ENCODE measurements at regions of chr17 and their contacts with region 1.

Region 1: DNA sequence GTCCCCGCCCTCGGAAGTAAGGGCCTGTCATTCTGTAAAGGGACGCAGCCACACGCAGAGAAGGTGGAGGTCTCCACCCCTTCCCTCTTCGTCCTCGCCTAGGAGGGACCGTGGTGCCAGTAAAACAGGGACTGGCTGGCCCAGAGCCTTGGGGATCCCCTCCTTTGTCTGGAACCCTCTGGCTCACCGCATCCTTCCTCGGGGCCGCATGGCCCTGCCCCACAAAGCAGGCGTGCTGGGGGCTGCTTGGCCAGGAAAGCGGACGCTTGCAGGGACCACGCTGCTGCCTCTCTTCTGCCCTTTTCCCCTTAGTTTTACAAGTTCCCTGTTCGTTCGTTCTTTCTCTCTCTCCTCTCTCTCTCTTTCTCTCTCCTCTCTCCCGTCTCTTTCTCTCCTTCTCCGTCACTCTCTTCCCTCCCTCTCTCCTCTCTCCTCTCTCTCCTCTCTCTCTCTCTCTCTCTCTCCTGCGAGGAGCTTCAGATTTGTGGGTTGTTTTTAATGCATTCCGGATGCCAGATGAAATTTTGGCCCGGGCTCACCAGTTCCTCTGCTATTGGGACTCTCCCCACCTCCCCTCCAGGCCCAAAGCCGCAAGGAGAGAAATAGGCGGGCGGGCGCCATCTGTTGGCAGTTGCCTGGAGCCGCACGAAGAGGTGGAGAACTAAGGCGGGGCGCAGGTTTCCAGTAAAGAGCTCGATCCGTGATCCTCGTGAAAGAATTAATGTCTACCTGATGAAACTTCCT is 35.1 kb upstream of the CDRT4 start:
- DNase-seq: peak; percentile 84
- H3K4me3 Mint-ChIP-seq: no peak overlapping the region
- H3K27ac Mint-ChIP-seq: no peak overlapping the region
- H3K4me1 Mint-ChIP-seq: peaks cover 7% of the 10 kb centered on the region
- H3K27me3 Mint-ChIP-seq: no peaks in the 10 kb centered on the region
- CTCF ChIP-seq: peak; percentile 69

Region 2: GRCh38 chr17:15233022-15233805 is 269.3 kb before region 1 on chr17:
- CTCF ChIA-PET with region 1: interaction called, 14 read pairs
- POLR2A ChIA-PET with region 1: no interaction called
- intact Hi-C with region 1: no loop called
- DNase-seq: peak; percentile 68
- H3K4me3 Mint-ChIP-seq: no peak overlapping the region
- H3K27ac Mint-ChIP-seq: no peak overlapping the region
- H3K4me1 Mint-ChIP-seq: no peaks in the 10 kb centered on the region
- H3K27me3 Mint-ChIP-seq: no peaks in the 10 kb centered on the region
- CTCF ChIP-seq: peak; percentile 28

Region 3: DNA sequence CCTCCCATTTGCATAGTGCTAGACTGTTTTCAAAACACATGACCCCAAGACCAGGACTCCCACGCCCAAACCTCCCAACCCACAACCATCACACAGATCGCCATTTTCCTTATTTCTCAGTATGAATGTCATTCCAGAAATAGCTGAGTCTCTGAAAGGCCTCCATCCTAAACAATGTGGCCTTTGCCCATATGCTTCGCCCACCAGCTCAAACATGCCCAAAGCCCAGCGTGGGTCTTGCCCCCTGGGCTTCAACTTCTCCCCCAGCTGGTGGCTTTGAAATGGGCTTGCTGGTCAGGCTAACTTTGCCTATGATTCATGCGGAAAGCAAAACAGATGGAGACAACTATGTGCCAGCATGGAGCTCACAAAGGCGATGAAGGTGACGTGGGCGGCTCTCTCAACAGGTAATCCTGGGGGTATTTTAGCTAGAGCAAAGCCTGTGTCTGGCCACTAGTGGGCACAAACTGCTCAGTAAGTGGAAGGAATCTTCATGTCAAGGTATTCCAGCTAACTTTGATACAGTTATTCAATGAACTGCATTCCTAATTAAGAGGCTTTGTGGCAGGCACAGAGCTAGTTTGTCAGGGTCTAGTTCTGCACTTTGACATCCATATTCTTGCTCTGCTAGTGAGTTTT is 254.5 kb before region 1 on chr17:
- CTCF ChIA-PET with region 1: interaction called, 18 read pairs
- POLR2A ChIA-PET with region 1: no interaction called
- intact Hi-C with region 1: no loop called
- DNase-seq: peak; percentile 35
- H3K4me3 Mint-ChIP-seq: no peak overlapping the region
- H3K27ac Mint-ChIP-seq: no peak overlapping the region
- H3K4me1 Mint-ChIP-seq: no peaks in the 10 kb centered on the region
- H3K27me3 Mint-ChIP-seq: no peaks in the 10 kb centered on the region
- CTCF ChIP-seq: peak; percentile 38

Region 4: GRCh38 chr17:15257258-15257788 is 245.2 kb before region 1 on chr17:
- CTCF ChIA-PET with region 1: interaction called, 148 read pairs
- POLR2A ChIA-PET with region 1: no interaction called
- intact Hi-C with region 1: loop called (anchors 1 kb)
- DNase-seq: peak; percentile 86
- H3K4me3 Mint-ChIP-seq: no peak overlapping the region
- H3K27ac Mint-ChIP-seq: no peak overlapping the region
- H3K4me1 Mint-ChIP-seq: peaks cover 9% of the 10 kb centered on the region
- H3K27me3 Mint-ChIP-seq: peaks cover 9% of the 10 kb centered on the region
- CTCF ChIP-seq: peak; percentile 69

Region 5: DNA sequence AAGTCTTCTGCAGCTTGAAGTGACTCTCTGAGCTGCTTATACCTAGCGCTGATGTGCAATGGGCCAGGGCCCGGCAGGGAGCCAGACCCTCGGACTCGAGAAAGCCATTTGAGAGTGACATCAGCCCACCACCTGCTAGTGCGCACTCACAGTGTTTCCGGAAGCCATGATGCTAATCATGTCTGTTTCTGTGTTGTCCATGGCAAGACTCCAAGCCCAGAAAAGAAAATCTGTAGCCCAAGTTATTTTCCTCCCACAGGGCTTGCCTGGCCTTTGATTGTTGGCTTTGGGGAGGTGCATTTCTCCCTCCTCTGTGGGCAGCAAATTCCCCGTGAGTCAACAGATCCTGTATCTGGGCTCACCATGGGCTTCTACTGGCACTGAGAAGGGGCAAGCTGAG is 33.3 kb before region 1 on chr17:
- CTCF ChIA-PET with region 1: interaction called, 12 read pairs
- POLR2A ChIA-PET with region 1: interaction called, 3 read pairs
- intact Hi-C with region 1: no loop called
- DNase-seq: no peak
- H3K4me3 Mint-ChIP-seq: no peak overlapping the region
- H3K27ac Mint-ChIP-seq: no peak overlapping the region
- H3K4me1 Mint-ChIP-seq: no peaks in the 10 kb centered on the region
- H3K27me3 Mint-ChIP-seq: no peaks in the 10 kb centered on the region
- CTCF ChIP-seq: no peak

Region 6: DNA sequence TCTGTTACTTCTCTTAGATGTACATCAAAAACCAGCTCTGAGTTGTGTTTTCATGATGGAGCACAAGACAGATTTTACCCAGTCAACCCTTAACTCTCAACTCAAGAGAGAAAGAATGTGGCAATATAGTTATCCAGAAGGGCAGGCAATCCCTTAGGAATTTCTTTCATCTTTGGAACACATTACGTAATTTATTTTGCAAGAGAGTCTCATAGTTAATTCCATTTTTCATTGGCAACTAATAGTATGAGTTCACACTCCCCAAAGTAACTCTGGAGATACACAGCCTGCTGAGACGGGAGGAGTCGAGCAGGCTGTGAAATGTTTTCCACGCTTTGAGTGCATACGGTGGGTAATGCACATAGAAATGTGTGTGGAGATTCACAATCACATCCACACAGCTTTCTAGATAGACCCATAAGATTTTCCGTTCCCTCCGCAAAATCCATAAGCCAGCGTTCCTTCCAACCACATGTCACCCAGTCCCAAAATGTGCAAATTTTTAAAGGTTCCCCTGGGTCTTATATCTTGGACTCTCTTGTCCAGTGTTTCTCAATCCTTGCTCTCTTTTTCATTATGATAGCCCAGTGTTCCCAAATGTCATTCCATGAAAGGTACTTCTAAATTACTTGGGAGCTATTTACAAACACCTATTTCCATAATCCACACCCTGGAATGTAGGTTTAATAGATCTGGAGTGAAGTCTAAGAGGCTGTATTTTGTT is 26.7 kb before region 1 on chr17:
- CTCF ChIA-PET with region 1: interaction called, 14 read pairs
- POLR2A ChIA-PET with region 1: interaction called, 3 read pairs
- intact Hi-C with region 1: no loop called
- DNase-seq: peak; percentile 56
- H3K4me3 Mint-ChIP-seq: no peak overlapping the region
- H3K27ac Mint-ChIP-seq: no peak overlapping the region
- H3K4me1 Mint-ChIP-seq: peaks cover 16% of the 10 kb centered on the region
- H3K27me3 Mint-ChIP-seq: no peaks in the 10 kb centered on the region
- CTCF ChIP-seq: no peak

Region 7: GRCh38 chr17:15488557-15488956 is 14.0 kb before region 1 on chr17:
- CTCF ChIA-PET with region 1: interaction called, 12 read pairs
- POLR2A ChIA-PET with region 1: no interaction called
- intact Hi-C with region 1: no loop called
- DNase-seq: no peak
- H3K4me3 Mint-ChIP-seq: no peak overlapping the region
- H3K27ac Mint-ChIP-seq: no peak overlapping the region
- H3K4me1 Mint-ChIP-seq: no peaks in the 10 kb centered on the region
- H3K27me3 Mint-ChIP-seq: no peaks in the 10 kb centered on the region
- CTCF ChIP-seq: no peak

Measured in MCF 10A (cell line).